ENCODE measurements at regions of chr11 and their contacts with region 1.

Region 1: GRCh38 chr11:95705485-95706124 is 84.0 kb downstream of the FAM76B start:
- DNase-seq: peak; percentile 68 to 78 (median 77)
- H3K4me3 ChIP-seq: no peak overlapping the region
- H3K4me3 Mint-ChIP-seq: no peak overlapping the region
- H3K27ac ChIP-seq: no peak overlapping the region
- H3K27ac Mint-ChIP-seq: no peak overlapping the region
- H3K4me1 ChIP-seq: peaks cover 0 to 2% of the 10 kb centered on the region in 2 donors
- H3K4me1 Mint-ChIP-seq: no peaks in the 10 kb centered on the region
- H3K27me3 ChIP-seq: no peaks in the 10 kb centered on the region
- H3K27me3 Mint-ChIP-seq: peaks cover 0 to 2% (median 1%) of the 10 kb centered on the region in 3 donors
- CTCF ChIP-seq: peak; percentile 86

Region 2: DNA sequence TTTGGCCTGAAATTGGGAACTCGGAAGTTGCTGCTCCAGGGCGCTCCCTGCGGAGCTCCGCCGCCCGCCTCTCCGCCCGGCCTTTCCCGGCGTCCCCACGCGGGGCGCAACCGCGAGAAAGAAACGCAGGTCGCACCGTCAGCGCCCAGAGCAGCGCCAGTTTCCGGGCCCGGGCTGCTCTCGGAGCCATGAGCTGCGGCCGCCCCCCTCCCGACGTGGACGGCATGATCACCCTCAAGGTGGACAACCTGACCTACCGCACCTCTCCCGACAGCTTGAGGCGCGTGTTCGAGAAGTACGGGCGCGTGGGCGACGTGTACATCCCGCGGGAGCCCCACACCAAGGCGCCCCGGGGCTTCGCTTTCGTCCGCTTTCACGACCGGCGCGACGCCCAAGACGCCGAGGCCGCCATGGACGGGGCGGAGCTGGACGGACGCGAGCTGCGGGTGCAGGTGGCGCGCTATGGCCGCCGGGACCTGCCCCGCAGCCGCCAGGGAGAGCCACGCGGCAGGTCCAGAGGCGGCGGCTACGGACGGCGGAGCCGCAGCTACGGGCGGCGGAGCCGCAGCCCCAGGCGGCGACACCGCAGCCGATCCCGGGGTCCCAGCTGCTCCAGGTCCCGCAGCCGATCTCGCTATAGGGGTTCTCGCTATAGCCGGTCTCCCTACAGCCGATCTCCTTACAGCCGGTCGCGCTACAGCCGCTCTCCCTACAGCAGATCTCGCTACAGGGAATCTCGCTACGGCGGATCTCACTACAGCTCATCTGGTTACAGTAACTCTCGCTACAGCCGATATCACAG is 638.4 kb before region 1 on chr11:
- intact Hi-C with region 1: loop called (anchors 5 to 10 kb)
- DNase-seq: peak; percentile 55 to 66 (median 64)
- H3K4me3 ChIP-seq: peak overlapping the region; percentile 80 to 93 (median 90)
- H3K4me3 Mint-ChIP-seq: peak overlapping the region; percentile 98 to 100
- H3K27ac ChIP-seq: peak overlapping the region; percentile 85 to 87
- H3K27ac Mint-ChIP-seq: peak overlapping the region; percentile 89 to 97 (median 93)
- H3K4me1 ChIP-seq: peaks cover 24 to 30% of the 10 kb centered on the region in 2 donors
- H3K4me1 Mint-ChIP-seq: peaks cover 27% of the 10 kb centered on the region
- H3K27me3 ChIP-seq: no peaks in the 10 kb centered on the region
- H3K27me3 Mint-ChIP-seq: peaks cover 0 to 2% (median 2%) of the 10 kb centered on the region in 3 donors
- CTCF ChIP-seq: peak; percentile 57

Region 3: DNA sequence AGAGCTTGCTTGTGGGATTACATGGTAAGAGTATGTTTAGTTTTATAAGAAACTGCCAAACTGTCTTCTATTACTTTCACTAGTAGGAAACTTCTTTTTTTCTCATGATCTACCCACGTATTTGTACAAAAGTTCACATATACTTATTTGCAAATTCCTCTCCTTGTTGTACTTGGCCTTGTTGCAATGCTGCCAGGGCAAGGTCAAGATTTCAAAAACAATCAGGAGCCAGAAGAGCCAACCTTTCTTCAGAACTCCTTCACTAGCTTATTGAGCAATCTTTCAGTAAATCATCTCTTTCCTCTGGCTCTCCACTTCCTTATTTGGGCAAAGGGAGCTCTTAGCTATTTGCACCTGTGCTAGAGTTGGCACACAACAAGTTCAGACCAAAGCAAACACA is 629.2 kb before region 1 on chr11:
- intact Hi-C with region 1: loop called in 1 of 2 experiments (anchors 10 kb)
- DNase-seq: peak in 2 of 3 donors; percentile 22 to 25
- H3K4me3 ChIP-seq: no peak overlapping the region
- H3K4me3 Mint-ChIP-seq: no peak overlapping the region
- H3K27ac ChIP-seq: no peak overlapping the region
- H3K27ac Mint-ChIP-seq: no peak overlapping the region
- H3K4me1 ChIP-seq: no peaks in the 10 kb centered on the region
- H3K4me1 Mint-ChIP-seq: peaks cover 3% of the 10 kb centered on the region
- H3K27me3 ChIP-seq: peaks cover 5 to 12% of the 10 kb centered on the region in 2 donors
- H3K27me3 Mint-ChIP-seq: peaks cover 4 to 8% (median 6%) of the 10 kb centered on the region in 3 donors
- CTCF ChIP-seq: no peak

Region 4: GRCh38 chr11:95751515-95751914 is 45.9 kb after region 1 on chr11:
- intact Hi-C with region 1: no loop called
- DNase-seq: no peak
- H3K4me3 ChIP-seq: no peak overlapping the region
- H3K4me3 Mint-ChIP-seq: no peak overlapping the region
- H3K27ac ChIP-seq: no peak overlapping the region
- H3K27ac Mint-ChIP-seq: no peak overlapping the region
- H3K4me1 ChIP-seq: no peaks in the 10 kb centered on the region
- H3K4me1 Mint-ChIP-seq: no peaks in the 10 kb centered on the region
- H3K27me3 ChIP-seq: no peaks in the 10 kb centered on the region
- H3K27me3 Mint-ChIP-seq: peaks cover 0 to 2% (median 1%) of the 10 kb centered on the region in 3 donors
- CTCF ChIP-seq: no peak